ENCODE measurements at regions of chr4 and their contacts with region 1.

Region 1: GRCh38 chr4:39638354-39639240 is at the start of gene SMIM14:
- H3K4me3 ChIP-seq: peak within 1 kb of the TSS; percentile 88
- H3K27ac ChIP-seq: peak within 1 kb of the TSS; percentile 91
- H3K4me1 ChIP-seq: no peaks in the 10 kb centered on the region
- CTCF ChIP-seq: peak; percentile 29

Region 2: DNA sequence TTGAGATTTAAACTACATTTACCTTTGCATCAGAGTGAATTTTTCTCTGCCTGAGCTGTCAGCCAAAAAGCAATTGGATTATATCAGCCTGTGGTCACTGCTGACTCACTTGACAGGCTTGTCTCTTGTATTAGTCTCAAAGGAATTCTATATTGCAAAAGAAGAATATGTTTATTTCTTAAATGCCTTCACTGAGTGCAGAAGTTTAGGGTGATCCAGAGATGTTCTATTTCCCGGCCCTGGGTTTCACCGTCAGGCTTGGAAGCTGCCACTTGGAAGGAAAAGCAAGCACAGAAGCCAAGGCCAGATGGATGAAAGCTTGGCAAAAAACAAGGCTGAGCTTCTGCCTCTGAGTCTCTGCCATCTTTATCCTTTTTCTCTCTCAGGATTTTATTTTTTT is 690.0 kb before region 1 on chr4:
- CTCF ChIA-PET with region 1: no interaction called
- POLR2A ChIA-PET with region 1: no interaction called
- H3K4me3 ChIP-seq: no peak overlapping the region
- H3K27ac ChIP-seq: no peak overlapping the region
- H3K4me1 ChIP-seq: no peaks in the 10 kb centered on the region
- CTCF ChIP-seq: no peak

Region 3: DNA sequence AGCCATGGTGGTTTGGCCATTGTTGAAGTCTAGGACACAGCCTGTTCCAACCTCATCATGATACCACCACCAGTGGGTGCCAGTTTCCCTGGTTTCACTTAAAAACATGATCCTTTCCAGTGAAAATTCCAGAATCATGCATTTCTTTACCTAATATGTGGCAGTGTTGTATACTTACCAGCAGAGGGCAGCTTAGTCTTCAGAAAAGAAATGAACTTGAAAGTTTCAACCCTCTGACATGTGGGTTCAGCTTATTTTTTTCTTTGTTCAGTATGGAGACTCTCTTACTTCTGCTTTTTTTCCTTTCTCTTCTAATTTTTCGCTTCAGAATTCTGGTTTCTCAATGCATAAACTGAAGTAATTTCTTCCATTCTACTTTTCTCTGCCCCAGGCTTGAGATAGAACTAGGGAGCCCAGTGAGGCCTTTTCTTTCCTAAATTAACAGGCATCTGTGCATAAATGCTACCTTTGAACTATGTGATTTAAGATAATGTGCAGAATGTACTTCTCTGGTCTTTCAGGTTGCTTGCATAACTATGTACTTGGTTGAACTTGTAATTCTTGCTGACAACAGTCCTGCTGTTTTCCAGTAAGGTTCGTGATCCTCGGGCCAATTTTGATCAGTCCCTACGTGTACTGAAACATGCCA is 169.0 kb before region 1 on chr4:
- CTCF ChIA-PET with region 1: interaction called, 4 read pairs
- POLR2A ChIA-PET with region 1: interaction called, 15 read pairs
- H3K4me3 ChIP-seq: no peak overlapping the region
- H3K27ac ChIP-seq: no peak overlapping the region
- H3K4me1 ChIP-seq: no peaks in the 10 kb centered on the region
- CTCF ChIP-seq: peak; percentile 69

Region 4: GRCh38 chr4:39527273-39528060 is 111.1 kb before region 1 on chr4 and contains the start of gene UGDH:
- CTCF ChIA-PET with region 1: no interaction called
- POLR2A ChIA-PET with region 1: interaction called, 60 read pairs
- H3K4me3 ChIP-seq: peak within 1 kb of the TSS; percentile 97
- H3K27ac ChIP-seq: peak within 1 kb of the TSS; percentile 64
- H3K4me1 ChIP-seq: no peaks in the 10 kb centered on the region
- CTCF ChIP-seq: no peak; the same call in 1 of the 2 replicates

Region 5: DNA sequence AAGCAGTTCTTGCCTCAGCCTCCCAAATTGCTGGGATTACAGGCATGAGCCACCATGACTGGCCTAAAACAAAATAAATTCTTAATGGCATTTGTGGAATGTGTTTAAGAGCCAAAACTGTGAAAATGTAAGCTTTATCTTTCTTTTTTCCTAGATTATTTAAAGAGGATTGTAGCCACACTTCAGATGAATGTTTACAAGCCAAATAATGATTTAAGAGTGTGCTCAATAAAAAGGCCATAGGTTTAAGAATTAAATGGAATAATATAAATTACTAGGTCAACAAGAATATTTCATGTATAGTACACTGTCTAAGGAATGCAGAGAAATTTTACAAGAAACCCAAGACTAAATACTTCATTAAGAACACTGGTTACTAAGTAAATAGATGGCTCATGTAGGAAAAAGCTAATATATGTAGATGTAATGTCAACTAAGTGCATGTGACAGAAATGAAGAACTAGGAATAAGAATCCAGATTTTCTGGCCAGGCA is 90.1 kb before region 1 on chr4:
- CTCF ChIA-PET with region 1: interaction called, 4 read pairs
- POLR2A ChIA-PET with region 1: interaction called, 12 read pairs
- H3K4me3 ChIP-seq: no peak overlapping the region
- H3K27ac ChIP-seq: no peak overlapping the region
- H3K4me1 ChIP-seq: 0 out of 2 replicates have a peak, but pooled peaks cover 3% of the 10 kb centered on the region
- CTCF ChIP-seq: no peak

Region 6: DNA sequence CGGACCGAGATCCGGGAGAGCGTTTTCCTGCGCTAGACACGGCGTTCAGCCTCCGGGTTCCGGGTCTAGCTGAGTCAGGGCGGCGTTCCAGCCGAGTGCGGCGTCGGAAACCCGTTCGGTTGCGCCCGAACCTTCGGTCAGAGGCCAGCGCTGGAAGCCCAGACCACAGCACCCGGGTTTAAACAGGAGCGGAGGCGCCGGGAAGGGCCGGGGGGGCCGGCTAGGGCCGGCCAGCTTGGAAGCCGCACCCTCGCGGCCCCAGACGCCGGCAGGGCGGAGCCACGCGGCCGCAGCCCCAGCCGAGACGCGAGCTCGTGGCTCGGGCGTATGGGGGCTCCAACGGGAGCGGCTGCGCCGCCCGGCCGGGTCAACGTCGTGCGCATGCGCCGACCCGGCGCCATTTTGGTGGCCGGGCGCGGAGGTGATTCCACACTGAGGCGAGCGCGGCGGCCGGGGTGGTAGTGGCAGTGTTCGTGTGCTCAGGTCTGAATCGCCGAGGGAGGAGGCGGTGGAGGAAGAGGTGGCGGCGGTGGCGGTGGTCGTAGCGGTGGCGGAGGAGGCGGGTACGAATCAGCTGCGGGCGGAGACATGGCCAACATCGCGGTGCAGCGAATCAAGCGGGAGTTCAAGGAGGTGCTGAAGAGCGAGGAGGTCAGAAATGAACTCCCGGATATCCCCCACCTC is 59.3 kb after region 1 on chr4 and contains the start of gene UBE2K:
- CTCF ChIA-PET with region 1: no interaction called
- POLR2A ChIA-PET with region 1: interaction called, 17 read pairs
- H3K4me3 ChIP-seq: peak within 1 kb of the TSS; percentile 98
- H3K27ac ChIP-seq: peak within 1 kb of the TSS; percentile 88
- H3K4me1 ChIP-seq: no peaks in the 10 kb centered on the region; the same call in 1 of the 2 replicates
- CTCF ChIP-seq: 0 out of 2 replicates have a peak, but pooled peaks have one; percentile 26

Measured in HEK293 (cell line).